ENCODE measurements at regions of chr17 and their contacts with region 1.

Region 1: DNA sequence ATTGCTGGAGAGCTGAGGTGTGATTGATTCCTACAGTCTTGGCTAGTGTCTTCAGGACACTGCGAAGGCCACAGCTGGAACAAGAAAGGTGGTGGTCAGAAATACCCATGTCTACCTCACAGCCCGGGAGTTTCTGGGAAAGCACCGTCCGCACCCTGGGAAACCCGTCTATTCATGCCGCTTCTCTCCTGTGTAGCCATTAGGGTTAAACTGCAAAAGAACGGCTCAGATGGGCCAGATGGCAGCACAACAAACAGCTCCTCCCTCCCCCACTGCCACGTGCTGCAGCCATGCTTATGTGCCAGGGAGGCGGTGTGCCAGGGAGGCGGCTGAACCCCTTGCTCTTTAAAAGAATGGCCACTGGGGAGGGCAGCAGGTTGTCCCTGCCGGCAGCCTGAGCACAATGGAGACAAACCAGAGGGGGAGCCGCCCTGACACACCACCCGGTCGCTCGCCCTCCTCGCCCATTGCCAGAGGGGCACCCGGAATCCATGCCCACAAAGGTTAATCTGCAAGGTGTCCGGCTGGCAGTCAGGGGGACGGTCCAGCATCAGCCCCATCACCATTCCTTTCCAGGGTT is 65.2 kb downstream of the CYTH1 start:
- DNase-seq: peak; percentile 76 to 92
- ATAC-seq: peak; percentile 92 to 96 (median 94)
- H3K4me3 ChIP-seq: peak overlapping the region; percentile 80
- H3K27ac ChIP-seq: peak overlapping the region; percentile 78
- H3K4me1 ChIP-seq: peaks cover 56% of the 10 kb centered on the region
- H3K27me3 ChIP-seq: no peaks in the 10 kb centered on the region
- CTCF ChIP-seq: peak; percentile 3

Region 2: DNA sequence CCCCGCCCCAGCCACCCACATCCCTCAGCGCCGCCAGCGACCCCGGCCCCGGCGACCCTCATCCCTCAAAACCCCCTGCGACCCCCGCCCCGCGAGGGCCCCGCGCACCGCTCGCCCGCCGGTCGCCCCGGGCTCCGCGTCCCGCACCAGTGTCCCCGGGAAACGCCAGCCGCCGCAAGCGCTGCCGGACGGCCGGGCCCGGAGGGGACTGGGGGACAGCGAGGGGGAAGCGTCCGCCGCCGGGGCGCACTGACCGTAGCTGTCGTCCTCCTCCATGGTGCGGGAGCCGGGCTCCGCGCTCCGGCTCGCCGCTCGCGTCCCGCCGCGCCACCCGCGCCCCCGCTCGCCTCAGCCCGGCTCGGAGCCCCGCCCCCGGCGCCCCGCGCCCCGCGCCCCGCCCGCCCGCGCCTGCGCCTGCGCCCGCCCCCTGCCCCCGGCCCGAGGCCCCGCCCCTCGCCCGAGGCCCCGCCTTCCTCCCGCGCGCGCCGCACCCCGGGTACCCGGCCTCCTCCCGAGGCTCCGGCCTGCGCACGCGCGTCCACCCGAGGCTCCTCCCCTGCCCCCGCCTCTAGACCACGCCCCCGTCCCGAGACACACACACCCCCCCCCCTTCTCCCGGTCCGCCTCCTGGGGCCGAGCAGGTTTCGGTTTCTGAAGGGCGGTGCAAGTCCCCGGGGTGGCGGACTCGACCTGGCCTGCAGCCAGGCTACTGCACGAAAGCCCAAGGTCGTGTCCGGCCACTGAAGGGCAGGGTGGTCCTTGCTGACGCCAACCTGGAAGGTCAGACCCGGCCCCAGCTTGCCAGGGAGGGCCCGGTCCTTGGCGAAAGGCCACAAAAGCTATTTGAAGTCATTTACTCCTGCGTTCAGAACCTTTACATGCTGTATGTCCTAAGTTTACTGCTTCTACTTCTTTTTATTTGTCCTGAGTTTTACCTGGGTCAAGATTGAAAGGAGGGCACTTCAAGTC is 65.3 kb after region 1 on chr17 and contains the start of gene CYTH1:
- intact Hi-C with region 1: loop called in 1 of 2 experiments (anchors 5 kb)
- DNase-seq: peak; percentile 96 to 98
- ATAC-seq: peak; percentile 91 to 95 (median 92)
- H3K4me3 ChIP-seq: peak within 1 kb of the TSS; percentile 95
- H3K27ac ChIP-seq: peak within 1 kb of the TSS; percentile 95
- H3K4me1 ChIP-seq: peaks cover 17% of the 10 kb centered on the region
- H3K27me3 ChIP-seq: no peaks in the 10 kb centered on the region
- CTCF ChIP-seq: no peak
- total RNA-seq, gene CYTH1: 25.6 to 40.4 (median 34.0) TPM

Region 3: GRCh38 chr17:78798695-78799559 is 82.0 kb after region 1 on chr17:
- intact Hi-C with region 1: loop called in 1 of 2 experiments (anchors 5 kb)
- DNase-seq: no peak
- ATAC-seq: peak; percentile 50 to 76 (median 54)
- H3K4me3 ChIP-seq: no peak overlapping the region
- H3K27ac ChIP-seq: peak overlapping the region; percentile 54
- H3K4me1 ChIP-seq: peaks cover 47% of the 10 kb centered on the region
- H3K27me3 ChIP-seq: no peaks in the 10 kb centered on the region
- CTCF ChIP-seq: peak; percentile 57

Region 4: GRCh38 chr17:78828470-78829185 is 111.7 kb after region 1 on chr17:
- intact Hi-C with region 1: no loop called
- DNase-seq: peak in 1 of 2 donors; percentile 22
- ATAC-seq: peak in 3 of 4 donors; percentile 37 to 49 (median 44)
- H3K4me3 ChIP-seq: no peak overlapping the region
- H3K27ac ChIP-seq: no peak overlapping the region
- H3K4me1 ChIP-seq: no peaks in the 10 kb centered on the region
- H3K27me3 ChIP-seq: no peaks in the 10 kb centered on the region
- CTCF ChIP-seq: no peak